ENCODE measurements at regions of chr20 and their contacts with region 1.

Region 1: DNA sequence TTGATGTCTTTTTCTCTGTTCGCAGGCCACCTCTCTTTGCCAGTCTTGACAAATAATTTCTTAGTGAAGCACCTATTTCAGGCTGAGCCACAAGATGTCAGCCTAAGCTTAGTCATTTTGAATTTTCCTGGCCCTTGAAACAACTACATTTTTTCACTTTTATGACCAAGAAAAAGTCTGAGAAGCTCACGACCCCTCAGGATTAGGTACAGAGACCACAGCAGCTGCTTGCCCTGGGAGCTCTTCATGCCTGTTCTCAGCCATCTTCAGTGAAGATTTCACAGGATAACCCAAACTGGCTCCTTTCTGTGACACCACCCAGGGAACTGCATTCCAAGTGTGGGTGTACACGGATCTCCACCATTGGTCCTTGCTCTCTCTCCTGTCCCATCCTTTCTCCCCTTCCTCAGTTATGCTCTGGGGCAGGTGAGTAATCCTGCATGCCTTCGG is 38.4 kb upstream of the SPTLC3 start:
- DNase-seq: no peak
- H3K4me3 ChIP-seq: no peak overlapping the region
- H3K27me3 ChIP-seq: peaks cover 2% of the 10 kb centered on the region; the same call in 1 of the 2 replicates
- CTCF ChIP-seq: peak; percentile 54

Region 2: GRCh38 chr20:13105864-13106457 is 135.6 kb after region 1 on chr20:
- CTCF ChIA-PET with region 1: interaction called, 21 read pairs
- POLR2A ChIA-PET with region 1: no interaction called
- DNase-seq: no peak
- H3K4me3 ChIP-seq: no peak overlapping the region
- H3K27me3 ChIP-seq: peaks cover 2% of the 10 kb centered on the region
- CTCF ChIP-seq: peak; percentile 66

Region 3: DNA sequence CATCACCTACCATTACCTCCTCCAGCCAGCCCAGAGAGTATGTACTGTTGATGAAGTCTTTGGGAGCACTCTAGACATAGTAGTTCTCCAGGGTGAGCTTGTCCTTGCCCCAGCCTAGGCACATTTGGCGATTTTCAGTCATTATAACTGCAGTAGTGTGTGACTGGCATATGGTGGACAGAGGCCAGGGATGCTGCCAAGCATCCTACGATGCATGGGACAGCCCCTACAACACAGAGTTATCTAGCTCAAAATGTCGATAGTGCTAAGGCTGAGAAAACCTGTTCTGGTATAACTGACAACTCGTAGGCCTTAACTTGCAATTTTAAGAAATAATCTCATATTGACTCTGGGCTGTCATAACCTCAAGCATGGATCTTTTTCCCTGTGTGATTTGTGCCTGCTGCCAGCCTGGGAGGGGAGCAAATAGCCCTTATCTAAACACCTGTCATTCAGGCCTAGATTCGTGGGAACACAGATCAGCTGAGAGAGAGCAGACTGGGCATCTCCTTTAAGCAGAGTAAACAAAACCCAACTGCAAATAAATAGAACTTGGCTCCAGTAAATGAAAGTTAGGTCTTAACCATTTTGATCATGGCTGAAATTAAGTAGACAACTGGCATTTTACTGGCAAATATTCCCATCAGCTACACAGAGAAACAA is 141.0 kb after region 1 on chr20:
- CTCF ChIA-PET with region 1: interaction called, 14 read pairs
- POLR2A ChIA-PET with region 1: no interaction called
- DNase-seq: no peak
- H3K4me3 ChIP-seq: no peak overlapping the region
- H3K27me3 ChIP-seq: peaks cover 2% of the 10 kb centered on the region
- CTCF ChIP-seq: no peak